Caco-2 (cell line): ENCODE measurements at regions of chr2 and their contacts with region 1.

Region 1: DNA sequence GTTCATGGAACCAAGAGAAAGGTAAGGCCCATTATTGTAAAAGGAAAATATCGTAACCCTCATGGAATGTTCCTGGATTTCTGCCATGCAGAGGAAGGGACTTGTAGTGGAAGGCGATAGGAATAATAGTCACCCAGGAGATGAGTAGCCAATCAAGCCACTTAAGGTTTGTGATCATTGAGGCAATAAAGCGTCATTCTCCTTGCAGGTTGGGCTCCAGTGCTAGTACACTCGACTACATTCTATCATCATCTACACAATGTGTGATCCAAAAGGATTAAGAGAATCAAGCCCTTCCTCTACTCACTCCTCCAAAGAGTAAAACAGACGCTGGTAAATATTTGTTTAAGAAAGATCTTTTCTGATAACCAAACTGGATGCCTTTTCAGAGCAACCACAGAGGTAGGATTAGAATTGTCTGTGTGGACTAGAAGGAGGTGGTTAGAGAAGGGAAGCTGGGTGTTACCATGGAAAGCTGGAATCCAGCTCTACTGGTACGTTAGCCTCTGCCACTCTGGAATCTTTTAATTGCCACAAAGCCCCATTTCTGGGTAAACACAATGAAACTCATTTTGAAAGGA is 245.7 kb downstream of the IKZF2 start:
- DNase-seq: peak; percentile 81 to 85
- H3K4me3 ChIP-seq: no peak overlapping the region
- H3K4me3 Mint-ChIP-seq: peak overlapping the region; percentile 70
- H3K27ac Mint-ChIP-seq: peak overlapping the region; percentile 89
- H3K4me1 ChIP-seq: peaks cover 27% of the 10 kb centered on the region
- H3K4me1 Mint-ChIP-seq: peaks cover 32% of the 10 kb centered on the region
- H3K27me3 ChIP-seq: no peaks in the 10 kb centered on the region
- H3K27me3 Mint-ChIP-seq: no peaks in the 10 kb centered on the region
- CTCF ChIP-seq: no peak

Region 2: GRCh38 chr2:212441141-212441540 is 464.6 kb before region 1 on chr2:
- CTCF ChIA-PET with region 1: no interaction called
- POLR2A ChIA-PET with region 1: no interaction called
- intact Hi-C with region 1: no loop called
- DNase-seq: no peak
- H3K4me3 ChIP-seq: no peak overlapping the region
- H3K4me3 Mint-ChIP-seq: no peak overlapping the region
- H3K27ac Mint-ChIP-seq: no peak overlapping the region
- H3K4me1 ChIP-seq: no peaks in the 10 kb centered on the region
- H3K4me1 Mint-ChIP-seq: no peaks in the 10 kb centered on the region
- H3K27me3 ChIP-seq: no peaks in the 10 kb centered on the region
- H3K27me3 Mint-ChIP-seq: no peaks in the 10 kb centered on the region
- CTCF ChIP-seq: no peak

Region 3: DNA sequence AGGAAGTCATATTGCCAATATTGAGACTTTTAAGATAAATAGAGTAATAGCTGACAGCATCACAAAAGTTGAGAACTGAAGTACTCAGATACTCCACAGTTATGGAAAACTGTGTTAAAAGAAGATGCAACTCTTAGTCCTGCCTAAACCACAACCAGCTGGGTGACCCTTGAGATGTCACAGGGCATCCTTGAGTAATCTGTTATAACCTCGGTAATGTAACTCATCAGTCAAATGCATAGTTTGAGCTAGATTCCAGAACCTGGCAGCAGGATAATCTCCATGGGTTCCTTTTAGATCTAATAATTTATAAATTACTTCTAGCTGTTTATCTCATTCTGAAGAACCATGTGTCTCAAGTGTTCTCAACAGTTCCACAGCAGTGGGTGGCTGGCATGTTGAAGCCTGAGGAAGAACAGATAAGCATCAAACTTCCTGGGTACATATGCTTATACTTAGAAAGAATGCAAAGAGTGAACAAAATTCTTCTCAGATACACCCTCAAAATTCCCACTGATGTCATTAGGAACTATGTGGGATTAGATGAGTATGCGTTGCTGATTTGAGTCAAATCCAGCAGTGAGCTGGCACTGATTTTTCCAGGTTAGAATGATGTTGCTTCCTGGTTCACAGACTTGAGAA is 63.1 kb before region 1 on chr2:
- CTCF ChIA-PET with region 1: no interaction called
- POLR2A ChIA-PET with region 1: no interaction called
- intact Hi-C with region 1: no loop called
- DNase-seq: no peak
- H3K4me3 ChIP-seq: no peak overlapping the region
- H3K4me3 Mint-ChIP-seq: no peak overlapping the region
- H3K27ac Mint-ChIP-seq: no peak overlapping the region
- H3K4me1 ChIP-seq: no peaks in the 10 kb centered on the region
- H3K4me1 Mint-ChIP-seq: no peaks in the 10 kb centered on the region
- H3K27me3 ChIP-seq: no peaks in the 10 kb centered on the region; the same call in 1 of the 2 replicates
- H3K27me3 Mint-ChIP-seq: no peaks in the 10 kb centered on the region
- CTCF ChIP-seq: no peak

Region 4: DNA sequence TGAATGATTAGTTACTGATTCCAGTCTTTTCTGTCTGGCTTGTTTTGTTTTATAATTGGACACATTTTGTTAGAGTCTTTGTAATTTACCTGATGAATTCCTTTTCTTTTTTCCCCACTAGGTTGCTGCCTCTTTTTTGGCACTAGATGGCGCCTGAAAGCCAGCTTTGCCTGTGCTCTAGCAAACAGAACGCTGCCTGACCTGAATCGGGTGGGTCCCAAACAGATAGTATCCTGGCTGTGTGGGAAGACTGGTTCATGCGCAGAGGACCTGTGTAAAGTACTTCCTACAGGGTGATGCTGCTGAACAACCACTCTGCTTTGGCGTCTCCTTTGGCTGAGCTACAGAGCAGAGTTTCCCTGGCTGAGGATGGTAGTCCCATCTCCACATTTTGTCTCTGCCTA is 42.5 kb before region 1 on chr2:
- CTCF ChIA-PET with region 1: no interaction called
- POLR2A ChIA-PET with region 1: no interaction called
- intact Hi-C with region 1: loop called (anchors 5 kb)
- DNase-seq: peak; percentile 64 to 70
- H3K4me3 ChIP-seq: no peak overlapping the region
- H3K4me3 Mint-ChIP-seq: no peak overlapping the region
- H3K27ac Mint-ChIP-seq: no peak overlapping the region
- H3K4me1 ChIP-seq: no peaks in the 10 kb centered on the region
- H3K4me1 Mint-ChIP-seq: no peaks in the 10 kb centered on the region
- H3K27me3 ChIP-seq: no peaks in the 10 kb centered on the region
- H3K27me3 Mint-ChIP-seq: no peaks in the 10 kb centered on the region
- CTCF ChIP-seq: peak; percentile 57 to 59

Region 5: DNA sequence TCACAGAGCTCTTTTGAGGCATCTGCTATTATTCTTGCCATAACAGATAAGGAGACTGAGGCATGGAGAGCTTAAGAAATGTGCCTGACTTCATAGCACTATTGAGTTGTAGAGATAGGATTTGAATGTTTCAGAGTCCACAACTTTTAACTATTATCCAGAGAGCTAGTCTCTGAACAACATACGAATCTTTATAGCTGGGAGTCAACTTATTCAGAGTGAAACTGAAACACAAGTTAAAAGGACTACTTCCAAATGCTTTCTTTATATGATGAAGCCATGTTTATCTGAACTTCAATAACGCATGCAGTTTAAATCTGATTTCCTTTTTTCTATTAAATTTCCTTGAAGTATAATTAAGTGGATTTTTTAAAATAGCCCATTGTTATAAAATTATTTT is 23.1 kb before region 1 on chr2:
- CTCF ChIA-PET with region 1: no interaction called
- POLR2A ChIA-PET with region 1: no interaction called
- intact Hi-C with region 1: no loop called
- DNase-seq: no peak
- H3K4me3 ChIP-seq: no peak overlapping the region
- H3K4me3 Mint-ChIP-seq: no peak overlapping the region
- H3K27ac Mint-ChIP-seq: no peak overlapping the region
- H3K4me1 ChIP-seq: no peaks in the 10 kb centered on the region
- H3K4me1 Mint-ChIP-seq: no peaks in the 10 kb centered on the region
- H3K27me3 ChIP-seq: no peaks in the 10 kb centered on the region
- H3K27me3 Mint-ChIP-seq: no peaks in the 10 kb centered on the region
- CTCF ChIP-seq: no peak

Region 6: GRCh38 chr2:212919250-212919649 is 13.5 kb after region 1 on chr2:
- CTCF ChIA-PET with region 1: no interaction called
- POLR2A ChIA-PET with region 1: no interaction called
- intact Hi-C with region 1: loop called (anchors 1 kb)
- DNase-seq: peak; percentile 47 to 67
- H3K4me3 ChIP-seq: no peak overlapping the region
- H3K4me3 Mint-ChIP-seq: no peak overlapping the region
- H3K27ac Mint-ChIP-seq: peak overlapping the region; percentile 56
- H3K4me1 ChIP-seq: peaks cover 15% of the 10 kb centered on the region
- H3K4me1 Mint-ChIP-seq: peaks cover 27% of the 10 kb centered on the region
- H3K27me3 ChIP-seq: no peaks in the 10 kb centered on the region
- H3K27me3 Mint-ChIP-seq: no peaks in the 10 kb centered on the region
- CTCF ChIP-seq: no peak

Region 7: DNA sequence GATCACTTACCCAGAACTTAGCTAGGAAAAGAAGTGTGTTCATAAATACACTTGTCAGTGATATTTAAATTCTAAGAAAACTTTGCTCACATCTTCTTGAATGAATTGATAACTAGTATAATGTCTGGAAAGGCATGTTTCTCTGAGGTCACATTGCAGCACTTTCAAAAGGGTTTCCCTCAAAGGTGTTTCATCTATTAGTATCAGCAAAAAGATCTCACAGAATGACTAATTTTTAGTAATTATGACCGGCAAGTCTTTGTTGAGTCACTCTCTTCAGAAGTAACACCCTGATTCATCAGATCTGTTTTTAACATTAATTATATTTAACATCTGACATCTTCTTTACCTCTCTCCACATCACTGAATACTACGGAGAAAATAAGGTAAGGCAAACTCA is 23.4 kb after region 1 on chr2:
- CTCF ChIA-PET with region 1: no interaction called
- POLR2A ChIA-PET with region 1: no interaction called
- intact Hi-C with region 1: loop called (anchors 1 kb)
- DNase-seq: no peak
- H3K4me3 ChIP-seq: no peak overlapping the region
- H3K4me3 Mint-ChIP-seq: no peak overlapping the region
- H3K27ac Mint-ChIP-seq: no peak overlapping the region
- H3K4me1 ChIP-seq: peaks cover 15% of the 10 kb centered on the region; the same call in 1 of the 2 replicates
- H3K4me1 Mint-ChIP-seq: peaks cover 11% of the 10 kb centered on the region
- H3K27me3 ChIP-seq: no peaks in the 10 kb centered on the region
- H3K27me3 Mint-ChIP-seq: no peaks in the 10 kb centered on the region
- CTCF ChIP-seq: no peak

Region 8: GRCh38 chr2:212940816-212941215 is 35.1 kb after region 1 on chr2:
- CTCF ChIA-PET with region 1: no interaction called
- POLR2A ChIA-PET with region 1: no interaction called
- intact Hi-C with region 1: loop called (anchors 1 kb)
- DNase-seq: no peak
- H3K4me3 ChIP-seq: no peak overlapping the region
- H3K4me3 Mint-ChIP-seq: no peak overlapping the region
- H3K27ac Mint-ChIP-seq: peak overlapping the region; percentile 59
- H3K4me1 ChIP-seq: peaks cover 10% of the 10 kb centered on the region
- H3K4me1 Mint-ChIP-seq: peaks cover 17% of the 10 kb centered on the region
- H3K27me3 ChIP-seq: no peaks in the 10 kb centered on the region
- H3K27me3 Mint-ChIP-seq: no peaks in the 10 kb centered on the region
- CTCF ChIP-seq: no peak

Region 9: DNA sequence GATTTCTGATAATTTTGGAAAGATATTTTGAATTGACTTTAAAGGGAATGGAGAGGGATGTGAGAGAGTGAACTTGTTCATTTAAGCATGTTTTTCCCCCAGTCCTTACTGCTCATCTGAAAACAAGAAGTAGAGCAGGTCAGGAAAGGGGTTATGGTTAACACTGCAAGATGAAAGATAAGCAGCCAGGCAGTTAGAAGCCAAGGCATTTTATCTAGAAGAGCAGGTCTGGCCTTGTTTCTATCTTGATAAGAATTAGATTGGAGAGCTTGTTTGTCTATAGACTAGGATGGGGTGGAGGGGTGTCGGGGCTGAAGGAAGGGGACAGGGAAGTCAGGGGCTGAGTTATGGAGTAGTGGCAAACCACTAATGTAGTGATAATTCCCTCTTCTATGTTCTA is 74.1 kb after region 1 on chr2:
- CTCF ChIA-PET with region 1: no interaction called
- POLR2A ChIA-PET with region 1: no interaction called
- intact Hi-C with region 1: loop called (anchors 2 kb)
- DNase-seq: peak; percentile 37 to 47
- H3K4me3 ChIP-seq: no peak overlapping the region
- H3K4me3 Mint-ChIP-seq: peak overlapping the region; percentile 17
- H3K27ac Mint-ChIP-seq: no peak overlapping the region
- H3K4me1 ChIP-seq: peaks cover 20% of the 10 kb centered on the region
- H3K4me1 Mint-ChIP-seq: peaks cover 19% of the 10 kb centered on the region
- H3K27me3 ChIP-seq: no peaks in the 10 kb centered on the region
- H3K27me3 Mint-ChIP-seq: no peaks in the 10 kb centered on the region
- CTCF ChIP-seq: no peak

Region 10: GRCh38 chr2:213021971-213022899 is 116.5 kb after region 1 on chr2:
- CTCF ChIA-PET with region 1: no interaction called
- POLR2A ChIA-PET with region 1: no interaction called
- intact Hi-C with region 1: no loop called
- DNase-seq: no peak
- H3K4me3 ChIP-seq: no peak overlapping the region
- H3K4me3 Mint-ChIP-seq: no peak overlapping the region
- H3K27ac Mint-ChIP-seq: no peak overlapping the region
- H3K4me1 ChIP-seq: no peaks in the 10 kb centered on the region
- H3K4me1 Mint-ChIP-seq: no peaks in the 10 kb centered on the region
- H3K27me3 ChIP-seq: no peaks in the 10 kb centered on the region
- H3K27me3 Mint-ChIP-seq: no peaks in the 10 kb centered on the region
- CTCF ChIP-seq: no peak

Region 11: GRCh38 chr2:213189001-213189899 is 283.5 kb after region 1 on chr2:
- CTCF ChIA-PET with region 1: no interaction called
- POLR2A ChIA-PET with region 1: no interaction called
- intact Hi-C with region 1: loop called (anchors 2 kb)
- DNase-seq: peak; percentile 50 to 65
- H3K4me3 ChIP-seq: peak overlapping the region; percentile 15
- H3K4me3 Mint-ChIP-seq: peak overlapping the region; percentile 71
- H3K27ac Mint-ChIP-seq: peak overlapping the region; percentile 85
- H3K4me1 ChIP-seq: peaks cover 32% of the 10 kb centered on the region
- H3K4me1 Mint-ChIP-seq: peaks cover 28% of the 10 kb centered on the region
- H3K27me3 ChIP-seq: no peaks in the 10 kb centered on the region
- H3K27me3 Mint-ChIP-seq: no peaks in the 10 kb centered on the region
- CTCF ChIP-seq: no peak